ENCODE measurements at regions of chr7 and their contacts with region 1.

Region 1: DNA sequence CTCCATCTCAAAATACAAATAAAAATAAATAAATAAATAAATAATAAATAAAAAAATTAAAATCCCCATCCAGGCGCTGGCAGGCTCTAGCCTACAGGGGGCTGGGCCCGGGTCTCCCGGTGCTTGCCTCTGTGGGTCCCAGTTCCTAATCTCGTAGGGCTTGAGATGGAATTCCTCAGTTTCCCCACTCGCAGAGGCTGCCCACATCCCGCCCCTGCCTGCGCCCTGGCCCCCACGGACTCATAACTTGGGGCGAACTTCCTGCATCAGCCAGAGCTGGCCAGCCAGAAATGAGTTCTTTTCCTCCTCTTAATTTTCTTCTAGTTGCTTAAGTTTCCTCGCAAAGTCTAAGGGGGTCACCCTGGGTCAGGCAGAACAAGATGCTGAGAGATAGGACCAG is 22.0 kb upstream of the SRRM3 start:
- DNase-seq: no peak
- ATAC-seq: no peak
- H3K4me3 ChIP-seq: no peak overlapping the region
- H3K27ac ChIP-seq: no peak overlapping the region
- H3K4me1 ChIP-seq: no peaks in the 10 kb centered on the region
- CTCF ChIP-seq: no peak
- EP300 ChIP-seq: no peak
- POLR2A ChIP-seq: no peak
- RAD21 ChIP-seq: no peak

Region 2: GRCh38 chr7:75608451-75609122 is 571.1 kb before region 1 on chr7:
- CTCF ChIA-PET with region 1: no interaction called
- POLR2A ChIA-PET with region 1: no interaction called
- DNase-seq: no peak
- ATAC-seq: no peak; a peak in 1 of 6 replicates
- H3K4me3 ChIP-seq: no peak overlapping the region
- H3K27ac ChIP-seq: no peak overlapping the region
- H3K4me1 ChIP-seq: peaks cover 7% of the 10 kb centered on the region; the same call in 2 of the 3 replicates
- CTCF ChIP-seq: no peak
- EP300 ChIP-seq: no peak
- POLR2A ChIP-seq: no peak
- RAD21 ChIP-seq: no peak

Region 3: GRCh38 chr7:75905785-75906604 is 273.7 kb before region 1 on chr7:
- CTCF ChIA-PET with region 1: no interaction called
- POLR2A ChIA-PET with region 1: no interaction called
- DNase-seq: peak; percentile 47 to 87
- ATAC-seq: peak; percentile 92 to 99
- H3K4me3 ChIP-seq: no peak overlapping the region
- H3K27ac ChIP-seq: peak overlapping the region; percentile 71 to 82
- H3K4me1 ChIP-seq: peaks cover 28% of the 10 kb centered on the region
- CTCF ChIP-seq: no peak
- EP300 ChIP-seq: no peak
- POLR2A ChIP-seq: no peak
- RAD21 ChIP-seq: peak in 1 of 2 experiments; percentile 23; a peak in 1 of 5 replicates

Region 4: DNA sequence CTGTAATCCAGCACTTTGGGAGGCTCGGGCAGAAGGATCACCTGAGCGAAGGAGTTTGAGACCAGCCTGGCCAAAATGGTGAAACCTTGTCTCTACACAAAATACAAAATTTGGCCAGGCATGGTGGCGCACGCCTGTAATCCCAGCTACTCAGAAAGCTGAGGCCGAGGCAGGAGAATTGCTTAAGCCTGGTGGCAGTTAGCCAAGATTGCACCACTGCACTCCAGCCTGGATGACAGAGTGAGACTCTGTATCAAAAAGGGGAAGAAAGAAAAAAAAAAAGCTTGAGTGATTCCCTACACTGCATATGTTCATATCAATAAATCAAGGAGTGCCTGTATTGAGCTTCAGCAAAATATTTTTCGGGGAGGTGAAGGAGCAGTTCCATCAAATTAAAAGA is 23.7 kb before region 1 on chr7:
- CTCF ChIA-PET with region 1: interaction called, 10 read pairs
- POLR2A ChIA-PET with region 1: no interaction called
- DNase-seq: peak in 1 of 2 experiments; percentile 31
- ATAC-seq: peak in 1 of 2 experiments; percentile 40; a peak in 2 of 6 replicates
- H3K4me3 ChIP-seq: no peak overlapping the region
- H3K27ac ChIP-seq: no peak overlapping the region
- H3K4me1 ChIP-seq: 0 out of 3 replicates have a peak, but pooled peaks cover 2% of the 10 kb centered on the region
- CTCF ChIP-seq: no peak
- EP300 ChIP-seq: no peak
- POLR2A ChIP-seq: no peak
- RAD21 ChIP-seq: no peak

Region 5: DNA sequence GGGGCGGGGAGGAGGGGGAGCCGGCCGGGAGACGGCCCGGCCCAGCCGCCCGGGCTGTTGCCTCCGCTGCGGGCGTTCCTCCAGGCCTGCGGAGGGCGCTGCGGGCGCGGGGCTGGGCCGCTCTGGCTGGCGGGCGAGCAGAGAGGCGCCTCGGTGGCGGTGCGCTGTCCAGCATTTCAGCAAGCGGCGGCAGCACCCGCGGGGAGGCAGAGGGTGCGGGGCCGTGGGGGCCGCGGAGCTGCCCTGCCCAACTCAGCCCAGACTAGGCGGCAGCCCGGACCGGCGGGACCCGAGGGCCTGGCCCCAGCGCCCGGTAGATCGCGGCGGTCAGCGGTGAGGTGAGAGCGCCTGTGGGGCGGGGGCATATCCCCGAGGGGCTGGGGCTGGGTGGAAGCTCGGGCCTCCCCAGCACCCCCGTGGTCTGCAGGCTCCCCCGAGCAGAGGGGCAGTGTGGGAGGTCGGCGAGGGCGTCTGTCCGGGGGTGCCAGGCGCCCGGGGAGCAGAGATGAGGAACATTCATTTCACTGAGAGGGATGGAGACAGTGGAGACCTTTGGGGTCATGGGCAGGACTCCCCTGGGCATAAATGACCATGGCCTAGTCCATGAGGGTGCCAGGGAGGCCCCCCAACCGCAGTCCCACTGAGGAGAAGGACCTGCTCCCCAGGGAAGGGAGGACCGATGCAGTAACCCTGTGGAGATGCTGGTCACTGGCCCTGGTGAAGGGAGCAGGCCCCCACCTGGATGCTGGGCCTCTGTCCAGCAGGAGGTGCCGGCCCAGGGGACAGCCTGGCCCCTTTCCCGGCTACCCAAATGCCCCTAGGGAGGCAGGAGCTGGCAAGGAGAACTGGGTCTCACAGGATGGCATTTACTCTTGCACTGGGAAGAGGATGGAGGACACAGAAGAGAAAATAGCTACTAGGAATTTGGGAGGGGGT is 22.3 kb after region 1 on chr7 and contains the start of gene SRRM3:
- CTCF ChIA-PET with region 1: interaction called, 32 read pairs
- POLR2A ChIA-PET with region 1: no interaction called
- DNase-seq: peak in 1 of 2 experiments; percentile 84
- ATAC-seq: peak; percentile 83 to 89
- H3K4me3 ChIP-seq: peak within 1 kb of the TSS; percentile 42
- H3K27ac ChIP-seq: peak within 1 kb of the TSS; percentile 42 to 80; a peak in 4 of 6 replicates
- H3K4me1 ChIP-seq: 0 out of 3 replicates have a peak, but pooled peaks cover 3% of the 10 kb centered on the region
- CTCF ChIP-seq: peak; percentile 73
- EP300 ChIP-seq: no peak
- POLR2A ChIP-seq: no peak
- RAD21 ChIP-seq: peak in 1 of 2 experiments; percentile 41; a peak in 2 of 5 replicates
- polyA plus RNA-seq, gene SRRM3: 2.4 and 3.0 TPM in 2 replicates

Region 6: GRCh38 chr7:76244781-76245391 is 65.2 kb after region 1 on chr7:
- CTCF ChIA-PET with region 1: interaction called, 11 read pairs
- POLR2A ChIA-PET with region 1: no interaction called
- DNase-seq: no peak
- ATAC-seq: no peak
- H3K4me3 ChIP-seq: no peak overlapping the region
- H3K27ac ChIP-seq: no peak overlapping the region
- H3K4me1 ChIP-seq: no peaks in the 10 kb centered on the region
- CTCF ChIP-seq: no peak
- EP300 ChIP-seq: no peak
- POLR2A ChIP-seq: no peak
- RAD21 ChIP-seq: no peak

Region 7: GRCh38 chr7:76272851-76273497 is 93.3 kb after region 1 on chr7:
- CTCF ChIA-PET with region 1: interaction called, 33 read pairs
- POLR2A ChIA-PET with region 1: no interaction called
- DNase-seq: no peak
- ATAC-seq: peak in 1 of 2 experiments; percentile 21; a peak in 1 of 6 replicates
- H3K4me3 ChIP-seq: no peak overlapping the region
- H3K27ac ChIP-seq: peak overlapping the region in 1 of 2 experiments; percentile 18; a peak in 1 of 6 replicates
- H3K4me1 ChIP-seq: peaks cover 7% of the 10 kb centered on the region; the same call in 2 of the 3 replicates
- CTCF ChIP-seq: no peak
- EP300 ChIP-seq: no peak
- POLR2A ChIP-seq: no peak
- RAD21 ChIP-seq: no peak

Region 8: GRCh38 chr7:76302347-76303201 is 122.9 kb after region 1 on chr7 and contains the start of gene HSPB1:
- CTCF ChIA-PET with region 1: interaction called, 59 read pairs
- POLR2A ChIA-PET with region 1: no interaction called
- DNase-seq: peak; percentile 73 to 92
- ATAC-seq: peak; percentile 52 to 60
- H3K4me3 ChIP-seq: peak within 1 kb of the TSS; percentile 91
- H3K27ac ChIP-seq: peak within 1 kb of the TSS; percentile 96
- H3K4me1 ChIP-seq: peaks cover 60% of the 10 kb centered on the region
- CTCF ChIP-seq: no peak
- EP300 ChIP-seq: no peak
- POLR2A ChIP-seq: peak; percentile 97
- RAD21 ChIP-seq: no peak
- polyA plus RNA-seq, gene HSPB1: 185 and 209 TPM in 2 replicates